PC-3 (cell line): ENCODE measurements at regions of chr4 and their contacts with region 1.

Region 1: DNA sequence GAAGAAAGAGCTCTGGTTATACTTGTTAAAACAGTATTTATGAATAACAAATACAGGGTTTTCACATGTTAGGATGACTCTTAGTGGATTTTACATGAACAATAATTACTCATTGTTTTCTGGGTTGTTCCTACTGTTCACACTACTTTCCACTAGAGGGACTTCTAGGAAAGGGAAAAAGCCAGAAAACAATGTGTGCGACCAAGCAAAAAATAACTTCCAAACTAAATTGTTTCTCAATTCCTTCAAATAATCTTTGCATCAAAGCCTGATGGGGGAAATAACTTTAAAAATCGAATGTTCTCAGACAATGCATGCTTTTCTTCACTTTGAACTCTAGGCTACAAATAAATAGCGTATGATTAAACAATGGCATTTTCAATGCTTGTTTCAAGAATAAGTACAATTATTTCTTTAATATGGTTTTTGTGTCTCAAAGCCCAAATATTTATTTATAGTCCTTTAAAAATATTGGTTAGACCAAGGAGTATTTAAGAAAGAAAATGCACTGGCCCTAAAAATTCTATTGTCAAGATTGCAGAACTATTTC is 72.1 kb upstream of the ETNPPL start:
- DNase-seq: peak; percentile 55
- ATAC-seq: peak; percentile 57
- H3K4me3 ChIP-seq: no peak overlapping the region
- H3K27ac ChIP-seq: no peak overlapping the region
- H3K4me1 ChIP-seq: no peaks in the 10 kb centered on the region
- H3K27me3 ChIP-seq: peaks cover 5% of the 10 kb centered on the region
- CTCF ChIP-seq: peak; percentile 72

Region 2: GRCh38 chr4:108783665-108784463 is 51.0 kb before region 1 on chr4:
- CTCF ChIA-PET with region 1: no interaction called
- POLR2A ChIA-PET with region 1: no interaction called
- intact Hi-C with region 1: no loop called
- DNase-seq: peak; percentile 25
- ATAC-seq: no peak
- H3K4me3 ChIP-seq: no peak overlapping the region
- H3K27ac ChIP-seq: no peak overlapping the region
- H3K4me1 ChIP-seq: no peaks in the 10 kb centered on the region
- H3K27me3 ChIP-seq: peaks cover 11% of the 10 kb centered on the region; the same call in 1 of the 2 replicates
- CTCF ChIP-seq: peak; percentile 40; the same call in 1 of the 2 replicates

Region 3: GRCh38 chr4:108941911-108942379 is 107.0 kb after region 1 on chr4:
- CTCF ChIA-PET with region 1: no interaction called
- POLR2A ChIA-PET with region 1: no interaction called
- intact Hi-C with region 1: no loop called
- DNase-seq: no peak
- ATAC-seq: no peak
- H3K4me3 ChIP-seq: no peak overlapping the region
- H3K27ac ChIP-seq: no peak overlapping the region
- H3K4me1 ChIP-seq: no peaks in the 10 kb centered on the region
- H3K27me3 ChIP-seq: peaks cover 6% of the 10 kb centered on the region; the same call in 1 of the 2 replicates
- CTCF ChIP-seq: no peak

Region 4: DNA sequence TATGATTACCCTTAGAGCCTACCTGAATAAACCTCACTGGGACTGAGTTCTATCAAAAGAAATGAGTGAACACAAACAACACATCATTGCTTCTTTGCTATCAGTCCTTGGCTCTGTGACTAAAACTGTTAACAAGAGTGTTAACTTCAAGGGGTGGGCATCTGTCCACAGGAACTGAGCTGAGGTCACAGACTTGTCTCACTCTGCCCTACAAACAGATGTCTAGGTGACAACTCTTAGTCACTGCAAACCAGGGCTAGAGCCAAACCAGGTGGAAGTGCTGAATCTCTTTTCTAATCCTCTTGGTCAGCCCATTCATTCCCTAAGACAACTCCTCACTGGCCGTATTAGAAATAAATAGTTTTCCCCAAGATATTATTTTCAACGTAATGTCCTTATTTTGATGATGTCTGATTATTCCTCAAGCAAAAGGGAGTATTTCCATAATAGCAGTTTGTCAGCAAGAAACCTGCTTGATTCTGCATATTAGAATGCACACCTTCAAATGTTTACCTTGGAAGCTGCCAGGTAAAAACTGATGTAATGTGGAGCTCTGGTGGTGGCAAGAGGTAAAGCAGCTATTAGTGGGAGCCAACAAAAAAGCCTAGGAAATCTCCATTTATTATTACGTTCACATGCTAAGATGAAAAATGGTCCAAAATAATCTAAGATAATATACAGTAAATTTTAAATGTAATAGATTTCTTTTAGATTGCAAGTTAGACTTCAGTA is 463.5 kb after region 1 on chr4:
- CTCF ChIA-PET with region 1: no interaction called
- POLR2A ChIA-PET with region 1: no interaction called
- intact Hi-C with region 1: loop called (anchors 5 kb)
- DNase-seq: peak; percentile 32
- ATAC-seq: no peak
- H3K4me3 ChIP-seq: no peak overlapping the region
- H3K27ac ChIP-seq: no peak overlapping the region
- H3K4me1 ChIP-seq: no peaks in the 10 kb centered on the region
- H3K27me3 ChIP-seq: peaks cover 31% of the 10 kb centered on the region
- CTCF ChIP-seq: peak; percentile 58

Region 5: DNA sequence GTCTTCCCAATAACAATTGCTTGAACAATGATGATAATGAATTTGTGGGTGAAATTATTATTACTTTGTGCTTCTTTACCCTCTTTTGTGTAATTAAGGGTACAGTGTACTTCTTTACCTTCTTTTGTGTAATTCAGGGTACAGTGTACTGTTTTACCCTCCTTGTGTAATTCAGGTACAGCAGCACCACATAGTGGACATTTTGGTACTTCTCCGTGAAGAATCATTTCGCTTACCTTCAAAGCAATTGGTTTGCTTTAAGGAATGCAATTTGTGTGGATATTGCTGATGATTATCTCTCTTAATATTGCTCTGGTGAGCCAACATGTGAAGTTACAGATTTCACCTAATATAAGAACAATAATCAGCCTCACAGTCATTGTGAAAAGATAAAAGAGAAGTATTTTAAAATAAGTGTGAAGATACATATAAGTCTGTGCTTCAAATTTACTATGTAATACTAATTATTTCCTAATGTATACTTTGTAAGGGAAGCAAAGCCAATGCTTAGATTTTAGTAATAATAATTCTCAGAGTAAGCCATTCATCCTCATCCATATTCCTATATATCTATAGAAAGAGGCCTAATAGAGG is 571.5 kb after region 1 on chr4:
- CTCF ChIA-PET with region 1: no interaction called
- POLR2A ChIA-PET with region 1: no interaction called
- intact Hi-C with region 1: loop called (anchors 1 kb)
- DNase-seq: peak; percentile 70
- ATAC-seq: peak; percentile 51; the same call in 1 of the 2 replicates
- H3K4me3 ChIP-seq: no peak overlapping the region
- H3K27ac ChIP-seq: no peak overlapping the region
- H3K4me1 ChIP-seq: no peaks in the 10 kb centered on the region
- H3K27me3 ChIP-seq: peaks cover 19% of the 10 kb centered on the region
- CTCF ChIP-seq: peak; percentile 75